Panc1 (cell line): ENCODE measurements at regions of chr16 and their contacts with region 1.

Region 1: DNA sequence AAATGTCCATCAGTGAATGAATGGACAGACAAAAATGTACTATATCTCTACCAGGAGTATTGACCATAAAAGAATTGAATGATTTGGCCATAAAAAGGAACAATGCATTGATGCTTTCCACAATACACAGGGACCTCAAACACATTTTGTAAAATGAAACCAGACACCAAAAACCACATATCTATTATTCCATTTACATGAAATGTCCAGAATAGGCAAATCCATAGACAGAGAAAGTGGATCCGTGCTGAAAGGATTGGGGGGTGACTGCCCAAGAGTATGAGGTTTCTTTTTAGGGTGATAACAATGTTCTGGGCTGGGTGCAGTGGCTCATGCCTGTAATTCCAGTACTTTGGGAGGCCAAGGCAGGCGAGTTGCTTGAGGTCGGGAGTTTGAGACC is 6.9 kb upstream of the LITAF start:
- DNase-seq: no peak
- ATAC-seq: no peak
- H3K4me3 ChIP-seq: no peak overlapping the region
- H3K27ac ChIP-seq: no peak overlapping the region
- H3K4me1 ChIP-seq: peaks cover 10% of the 10 kb centered on the region
- H3K27me3 ChIP-seq: no peaks in the 10 kb centered on the region
- CTCF ChIP-seq: no peak

Region 2: DNA sequence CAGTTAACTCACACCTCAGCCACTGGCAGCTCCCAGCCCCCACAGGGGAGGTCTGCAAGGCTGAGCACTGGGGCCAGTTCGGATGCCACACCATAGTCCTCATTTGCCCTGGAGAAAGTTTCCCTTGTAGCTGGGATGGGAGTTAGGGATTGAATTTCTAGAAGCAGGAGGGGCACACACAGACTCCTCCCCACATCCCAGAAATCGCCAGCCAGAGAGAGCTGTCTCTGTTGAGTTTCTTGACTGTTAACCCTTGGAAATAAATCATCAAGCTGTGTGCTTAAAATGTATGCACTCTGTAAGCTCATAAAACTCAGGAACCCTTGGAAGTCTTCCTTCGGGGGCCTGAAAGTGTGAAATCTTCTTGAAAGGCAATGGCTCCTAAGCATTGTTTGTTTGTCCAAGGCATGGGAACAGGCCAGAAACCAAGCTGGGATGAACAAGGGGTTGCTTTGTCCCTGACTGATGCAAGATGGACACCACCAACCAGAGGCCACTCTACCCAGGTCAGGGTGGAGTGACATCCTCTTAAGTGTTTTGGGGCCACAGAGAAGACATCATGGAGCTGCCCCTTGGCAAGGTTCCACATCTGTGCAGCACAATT is 319.8 kb before region 1 on chr16:
- CTCF ChIA-PET with region 1: no interaction called
- POLR2A ChIA-PET with region 1: no interaction called
- in situ Hi-C with region 1: no loop called
- intact Hi-C with region 1: no loop called
- DNase-seq: no peak
- ATAC-seq: peak; percentile 23; the same call in 1 of the 2 replicates
- H3K4me3 ChIP-seq: no peak overlapping the region
- H3K27ac ChIP-seq: no peak overlapping the region; the same call in 1 of the 2 replicates
- H3K4me1 ChIP-seq: peaks cover 9% of the 10 kb centered on the region
- H3K27me3 ChIP-seq: no peaks in the 10 kb centered on the region
- CTCF ChIP-seq: no peak

Region 3: GRCh38 chr16:11308493-11309283 is 284.9 kb before region 1 on chr16:
- CTCF ChIA-PET with region 1: no interaction called
- POLR2A ChIA-PET with region 1: no interaction called
- in situ Hi-C with region 1: no loop called
- intact Hi-C with region 1: no loop called
- DNase-seq: no peak
- ATAC-seq: peak; percentile 32; the same call in 1 of the 2 replicates
- H3K4me3 ChIP-seq: no peak overlapping the region
- H3K27ac ChIP-seq: no peak overlapping the region
- H3K4me1 ChIP-seq: peaks cover 21% of the 10 kb centered on the region
- H3K27me3 ChIP-seq: no peaks in the 10 kb centered on the region
- CTCF ChIP-seq: no peak

Region 4: GRCh38 chr16:11604783-11605558 is 11.4 kb after region 1 on chr16:
- CTCF ChIA-PET with region 1: no interaction called
- POLR2A ChIA-PET with region 1: no interaction called
- in situ Hi-C with region 1: no loop called
- intact Hi-C with region 1: no loop called
- DNase-seq: no peak
- ATAC-seq: no peak
- H3K4me3 ChIP-seq: no peak overlapping the region
- H3K27ac ChIP-seq: no peak overlapping the region
- H3K4me1 ChIP-seq: no peaks in the 10 kb centered on the region; the same call in 1 of the 2 replicates
- H3K27me3 ChIP-seq: no peaks in the 10 kb centered on the region
- CTCF ChIP-seq: no peak

Region 5: DNA sequence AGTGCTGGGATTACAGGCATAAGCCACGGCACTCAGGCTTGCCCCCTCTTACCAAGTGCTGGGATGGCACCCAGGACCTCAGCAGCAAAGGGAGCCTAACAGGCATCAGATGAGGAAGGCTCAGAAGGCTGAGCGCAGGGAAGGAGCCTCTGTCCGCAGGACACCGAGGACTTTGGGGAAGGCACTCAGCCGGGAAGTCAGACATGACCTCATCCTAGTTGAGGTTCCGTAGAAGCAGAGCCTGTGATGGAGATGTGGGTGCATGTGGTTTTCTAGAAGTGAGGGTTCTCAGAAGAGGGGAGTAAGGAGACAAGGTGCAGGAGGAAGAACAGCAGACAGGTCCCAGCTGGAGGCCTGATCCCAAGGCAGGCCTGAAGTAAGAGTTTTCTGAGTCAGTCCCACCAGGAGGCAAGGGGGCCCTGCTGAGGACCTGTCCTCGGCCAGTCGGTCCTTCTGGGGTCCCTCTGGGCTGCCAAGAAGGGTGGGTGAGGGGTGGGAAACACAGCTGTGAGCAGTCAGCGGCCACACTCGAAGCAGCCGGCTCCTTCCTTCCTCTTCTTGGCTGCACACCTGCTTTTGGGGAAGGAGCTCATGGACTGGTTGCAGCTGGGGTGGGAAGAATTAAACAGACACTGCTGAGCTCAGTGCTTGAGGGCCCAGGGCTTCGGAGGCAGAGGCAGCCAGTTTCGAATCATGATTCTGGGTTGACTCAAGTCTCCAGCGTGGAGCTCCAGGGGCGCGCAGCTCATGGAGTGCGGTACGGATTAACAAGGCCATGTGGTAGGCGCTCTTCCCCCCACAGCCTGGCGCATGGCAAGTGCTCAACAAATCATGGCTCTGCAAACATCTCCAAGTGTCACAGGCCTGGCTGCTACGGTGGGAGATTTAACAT is 35.7 kb after region 1 on chr16:
- CTCF ChIA-PET with region 1: no interaction called
- POLR2A ChIA-PET with region 1: no interaction called
- in situ Hi-C with region 1: no loop called
- intact Hi-C with region 1: no loop called
- DNase-seq: no peak
- ATAC-seq: no peak
- H3K4me3 ChIP-seq: no peak overlapping the region
- H3K27ac ChIP-seq: no peak overlapping the region
- H3K4me1 ChIP-seq: no peaks in the 10 kb centered on the region
- H3K27me3 ChIP-seq: no peaks in the 10 kb centered on the region
- CTCF ChIP-seq: no peak

Region 6: GRCh38 chr16:11669380-11670146 is 76.0 kb after region 1 on chr16:
- CTCF ChIA-PET with region 1: no interaction called
- POLR2A ChIA-PET with region 1: interaction called, 14 read pairs
- in situ Hi-C with region 1: no loop called
- intact Hi-C with region 1: no loop called
- DNase-seq: no peak
- ATAC-seq: peak; percentile 59
- H3K4me3 ChIP-seq: peak overlapping the region; percentile 55 to 62
- H3K27ac ChIP-seq: 0 out of 2 replicates have a peak overlapping the region, but pooled peaks have one; percentile 23
- H3K4me1 ChIP-seq: peaks cover 6% of the 10 kb centered on the region
- H3K27me3 ChIP-seq: no peaks in the 10 kb centered on the region
- CTCF ChIP-seq: no peak